ENCODE measurements at regions of chr12 and their contacts with region 1.

Region 1: GRCh38 chr12:42482445-42483237 is 106.9 kb downstream of the PRICKLE1 start:
- DNase-seq: no peak
- H3K4me3 ChIP-seq: peak overlapping the region; percentile 86
- H3K27ac ChIP-seq: peak overlapping the region; percentile 84
- H3K27me3 ChIP-seq: no peaks in the 10 kb centered on the region
- CTCF ChIP-seq: peak; percentile 79

Region 2: GRCh38 chr12:42119085-42119633 is 363.5 kb before region 1 on chr12:
- CTCF ChIA-PET with region 1: no interaction called
- POLR2A ChIA-PET with region 1: interaction called, 10 read pairs
- DNase-seq: peak; percentile 85
- H3K4me3 ChIP-seq: no peak overlapping the region
- H3K27ac ChIP-seq: peak overlapping the region; percentile 48
- H3K27me3 ChIP-seq: no peaks in the 10 kb centered on the region
- CTCF ChIP-seq: no peak

Region 3: DNA sequence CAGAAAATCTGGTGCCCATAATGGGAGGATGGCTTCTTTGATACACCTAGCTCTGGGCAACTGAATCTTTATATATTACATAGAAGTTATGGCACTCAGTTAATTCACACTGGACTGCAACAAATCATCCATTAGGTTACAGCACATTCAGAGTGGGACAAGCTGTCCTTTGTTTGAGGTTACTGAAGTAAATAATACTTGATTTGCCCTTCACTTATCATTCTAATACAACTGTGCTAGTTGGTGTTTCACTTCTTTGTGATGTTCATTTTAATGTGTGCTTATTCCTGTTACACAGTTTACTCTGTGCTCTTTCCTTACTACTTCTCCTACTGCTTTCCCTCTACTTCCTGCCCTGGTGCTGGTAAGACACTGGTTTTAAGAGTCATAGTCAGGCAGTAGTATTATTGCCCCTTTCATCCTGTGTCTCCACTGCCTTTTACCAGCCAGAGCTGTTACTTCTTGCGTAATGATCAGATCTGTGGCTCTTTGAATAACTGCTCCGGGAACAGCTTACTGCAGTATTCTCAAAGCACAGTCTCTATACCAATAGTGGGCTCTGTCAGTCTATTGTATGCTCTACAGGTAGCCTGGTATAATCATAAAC is 301.5 kb before region 1 on chr12:
- CTCF ChIA-PET with region 1: no interaction called
- POLR2A ChIA-PET with region 1: no interaction called
- DNase-seq: no peak
- H3K4me3 ChIP-seq: no peak overlapping the region
- H3K27ac ChIP-seq: no peak overlapping the region
- H3K27me3 ChIP-seq: no peaks in the 10 kb centered on the region
- CTCF ChIP-seq: no peak

Region 4: DNA sequence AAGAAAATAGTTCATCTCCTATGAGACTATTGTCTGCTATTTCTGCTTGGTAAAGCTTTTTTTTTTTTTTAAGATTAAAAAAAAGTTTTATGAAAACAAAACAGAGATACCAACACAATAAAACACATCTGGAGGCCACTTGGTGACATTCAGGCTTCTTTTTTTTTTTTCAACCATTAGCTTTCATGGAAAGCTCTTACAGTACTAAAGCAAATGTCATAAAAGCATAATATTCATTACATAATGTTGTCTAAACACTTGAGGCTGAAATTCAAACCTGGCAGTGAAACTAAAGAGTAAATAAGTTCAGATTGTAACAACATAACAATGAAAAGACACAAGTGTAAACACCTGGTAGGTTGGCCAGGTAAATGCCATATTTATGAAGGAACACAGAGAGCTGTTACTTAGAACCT is 92.2 kb after region 1 on chr12:
- CTCF ChIA-PET with region 1: interaction called, 48 read pairs
- POLR2A ChIA-PET with region 1: interaction called, 11 read pairs
- DNase-seq: no peak
- H3K4me3 ChIP-seq: no peak overlapping the region
- H3K27ac ChIP-seq: no peak overlapping the region
- H3K27me3 ChIP-seq: no peaks in the 10 kb centered on the region
- CTCF ChIP-seq: no peak

Region 5: DNA sequence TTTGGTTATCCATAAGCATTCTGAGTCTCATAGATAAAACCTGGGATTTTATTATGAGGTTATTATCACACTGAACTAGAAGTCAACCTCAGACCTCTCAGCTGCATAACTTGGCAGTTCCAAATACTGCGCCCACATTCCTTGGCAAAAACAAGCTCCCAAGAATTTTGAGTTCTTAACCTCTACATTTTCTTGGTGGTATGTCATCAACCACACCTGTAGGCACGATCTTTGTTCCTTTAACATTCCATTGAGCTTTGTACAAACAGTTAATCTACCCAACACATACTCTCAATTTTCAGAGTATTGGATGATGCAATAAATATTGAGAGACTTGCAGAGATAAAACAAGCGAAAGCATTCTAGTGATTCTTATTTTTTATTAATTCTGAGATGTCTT is 478.8 kb after region 1 on chr12:
- CTCF ChIA-PET with region 1: no interaction called
- POLR2A ChIA-PET with region 1: interaction called, 14 read pairs
- DNase-seq: peak; percentile 63
- H3K4me3 ChIP-seq: no peak overlapping the region
- H3K27ac ChIP-seq: no peak overlapping the region
- H3K27me3 ChIP-seq: no peaks in the 10 kb centered on the region
- CTCF ChIP-seq: no peak

Region 6: GRCh38 chr12:43282106-43282505 is 799.5 kb after region 1 on chr12:
- CTCF ChIA-PET with region 1: interaction called, 49 read pairs
- POLR2A ChIA-PET with region 1: interaction called, 4 read pairs
- DNase-seq: no peak
- H3K4me3 ChIP-seq: no peak overlapping the region
- H3K27ac ChIP-seq: no peak overlapping the region
- H3K27me3 ChIP-seq: no peaks in the 10 kb centered on the region
- CTCF ChIP-seq: peak; percentile 49